Activated CD8-positive, alpha-beta T cell treated with anti-CD3 and anti-CD28 coated beads for 36 hours (primary cell): ENCODE measurements at regions of chr5 and their contacts with region 1.

Region 1: GRCh38 chr5:50962934-50963872 is 296.8 kb downstream of the PARP8 start:
- DNase-seq: peak; percentile 83
- ATAC-seq: peak; percentile 93
- H3K4me3 Mint-ChIP-seq: peak overlapping the region; percentile 74
- H3K27ac Mint-ChIP-seq: no peak overlapping the region
- H3K4me1 Mint-ChIP-seq: peaks cover 35% of the 10 kb centered on the region
- H3K27me3 Mint-ChIP-seq: peaks cover 64% of the 10 kb centered on the region
- CTCF ChIP-seq: peak; percentile 90

Region 2: GRCh38 chr5:51382763-51383490 is 419.7 kb after region 1 on chr5 and contains the start of gene ISL1:
- CTCF ChIA-PET with region 1: interaction called, 6 read pairs
- POLR2A ChIA-PET with region 1: no interaction called
- intact Hi-C with region 1: loop called (anchors 5 kb)
- DNase-seq: peak; percentile 12
- ATAC-seq: peak; percentile 37
- H3K4me3 Mint-ChIP-seq: peak within 1 kb of the TSS; percentile 29
- H3K27ac Mint-ChIP-seq: no peak within 1 kb of the TSS
- H3K4me1 Mint-ChIP-seq: peaks cover 4% of the 10 kb centered on the region
- H3K27me3 Mint-ChIP-seq: peaks cover 90% of the 10 kb centered on the region
- CTCF ChIP-seq: no peak
- total RNA-seq, gene ISL1: not detected

Region 3: GRCh38 chr5:52007230-52007858 is 1044.1 kb after region 1 on chr5:
- CTCF ChIA-PET with region 1: interaction called, 4 read pairs
- POLR2A ChIA-PET with region 1: no interaction called
- intact Hi-C with region 1: loop called (anchors 5 kb)
- DNase-seq: no peak
- ATAC-seq: no peak
- H3K4me3 Mint-ChIP-seq: no peak overlapping the region
- H3K27ac Mint-ChIP-seq: no peak overlapping the region
- H3K4me1 Mint-ChIP-seq: no peaks in the 10 kb centered on the region
- H3K27me3 Mint-ChIP-seq: no peaks in the 10 kb centered on the region
- CTCF ChIP-seq: peak; percentile 15

Region 4: GRCh38 chr5:52657247-52657645 is 1694.0 kb after region 1 on chr5:
- CTCF ChIA-PET with region 1: interaction called, 13 read pairs
- POLR2A ChIA-PET with region 1: no interaction called
- intact Hi-C with region 1: loop called (anchors 10 kb)
- DNase-seq: no peak
- ATAC-seq: no peak
- H3K4me3 Mint-ChIP-seq: no peak overlapping the region
- H3K27ac Mint-ChIP-seq: no peak overlapping the region
- H3K4me1 Mint-ChIP-seq: peaks cover 1% of the 10 kb centered on the region
- H3K27me3 Mint-ChIP-seq: peaks cover 8% of the 10 kb centered on the region
- CTCF ChIP-seq: peak; percentile 82